PC-3 (cell line): ENCODE measurements at regions of chr9 and their contacts with region 1.

Region 1: GRCh38 chr9:137150617-137151457 is 11.9 kb downstream of the GRIN1 start:
- DNase-seq: peak; percentile 94
- ATAC-seq: peak; percentile 65
- H3K4me3 ChIP-seq: no peak overlapping the region
- H3K27ac ChIP-seq: no peak overlapping the region
- H3K4me1 ChIP-seq: no peaks in the 10 kb centered on the region; the same call in 1 of the 2 replicates
- H3K27me3 ChIP-seq: no peaks in the 10 kb centered on the region
- CTCF ChIP-seq: no peak

Region 2: GRCh38 chr9:137176302-137177182 is 25.7 kb after region 1 on chr9:
- CTCF ChIA-PET with region 1: interaction called, 3 read pairs
- POLR2A ChIA-PET with region 1: interaction called, 27 read pairs
- intact Hi-C with region 1: no loop called
- DNase-seq: peak; percentile 53
- ATAC-seq: peak; percentile 74
- H3K4me3 ChIP-seq: no peak overlapping the region
- H3K27ac ChIP-seq: no peak overlapping the region
- H3K4me1 ChIP-seq: no peaks in the 10 kb centered on the region
- H3K27me3 ChIP-seq: no peaks in the 10 kb centered on the region
- CTCF ChIP-seq: peak; percentile 60

Region 3: GRCh38 chr9:137188490-137189296 is 37.9 kb after region 1 on chr9 and contains the starts of genes ANAPC2 and SSNA1:
- CTCF ChIA-PET with region 1: no interaction called
- POLR2A ChIA-PET with region 1: interaction called, 19 read pairs
- intact Hi-C with region 1: loop called (anchors 2 kb)
- DNase-seq: peak; percentile 91
- ATAC-seq: peak; percentile 75
- H3K4me3 ChIP-seq: peak within 1 kb of the TSS; percentile 99
- H3K27ac ChIP-seq: peak within 1 kb of the TSS; percentile 92
- H3K4me1 ChIP-seq: peaks cover 25% of the 10 kb centered on the region
- H3K27me3 ChIP-seq: no peaks in the 10 kb centered on the region
- CTCF ChIP-seq: peak; percentile 44; the same call in 1 of the 2 replicates
- total RNA-seq, gene ANAPC2: 21.6 and 30.2 TPM in 2 replicates
- total RNA-seq, gene SSNA1: 123 and 148 TPM in 2 replicates

Region 4: DNA sequence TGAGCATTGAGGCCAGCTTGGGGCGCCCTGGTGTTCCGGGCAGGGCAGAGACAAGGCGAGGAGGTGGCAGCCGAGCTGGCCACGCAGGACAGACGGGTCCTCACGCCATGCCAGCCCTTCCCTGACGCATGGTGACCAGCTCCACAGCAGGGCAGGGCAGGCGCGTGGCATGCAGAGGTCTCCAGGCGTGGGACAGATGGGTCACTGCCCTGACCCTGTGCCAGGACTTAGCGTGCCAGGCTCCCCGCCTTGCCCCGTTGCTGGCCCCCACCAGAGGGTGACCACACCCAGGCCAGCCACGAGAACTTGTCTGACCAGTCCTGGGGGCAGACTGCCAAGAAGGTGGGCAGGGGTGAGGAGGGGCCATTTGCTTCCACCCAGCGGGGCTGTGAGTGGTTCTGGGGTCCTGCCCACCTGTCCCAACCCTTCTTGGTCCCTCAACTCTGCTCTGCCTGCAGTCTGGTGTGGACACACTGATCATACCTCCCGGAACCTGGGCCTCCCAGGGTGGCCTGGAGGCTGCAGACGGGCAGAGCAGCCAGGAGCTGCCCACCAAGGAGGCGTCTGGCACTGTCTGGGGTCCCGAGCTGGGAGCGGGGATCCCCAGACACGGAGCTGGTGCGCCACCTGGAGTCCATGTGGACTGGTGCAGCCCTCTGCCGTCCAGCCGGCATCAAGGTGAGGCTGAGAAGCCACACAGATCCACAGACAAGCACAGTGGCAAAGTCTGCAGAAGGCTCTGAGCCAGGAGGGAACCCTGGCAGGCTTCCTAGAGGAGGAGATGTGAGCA is 76.4 kb after region 1 on chr9 and contains the start of gene RNF224:
- CTCF ChIA-PET with region 1: no interaction called
- POLR2A ChIA-PET with region 1: no interaction called
- intact Hi-C with region 1: no loop called
- DNase-seq: peak; percentile 87
- ATAC-seq: peak; percentile 50
- H3K4me3 ChIP-seq: peak within 1 kb of the TSS; percentile 59
- H3K27ac ChIP-seq: peak within 1 kb of the TSS; percentile 99
- H3K4me1 ChIP-seq: peaks cover 40% of the 10 kb centered on the region
- H3K27me3 ChIP-seq: no peaks in the 10 kb centered on the region
- CTCF ChIP-seq: peak; percentile 84
- total RNA-seq, gene RNF224: 1.2 and 1.7 TPM in 2 replicates